HepG2 (cell line): ENCODE measurements at regions of chrX and their contacts with region 1.

Region 1: GRCh38 chrX:86946569-86946968 is 571.0 kb upstream of the KLHL4 start:
- DNase-seq: peak; percentile 30
- ATAC-seq: peak; percentile 74
- H3K4me3 ChIP-seq: no peak overlapping the region
- H3K27ac ChIP-seq: no peak overlapping the region
- H3K4me1 ChIP-seq: no peaks in the 10 kb centered on the region
- H3K27me3 ChIP-seq: no peaks in the 10 kb centered on the region
- CTCF ChIP-seq: peak; percentile 66
- EP300 ChIP-seq: no peak
- POLR2A ChIP-seq: no peak
- RAD21 ChIP-seq: no peak

Region 2: GRCh38 chrX:86322918-86323317 is 623.7 kb before region 1 on chrX:
- CTCF ChIA-PET with region 1: interaction called, 10 read pairs
- POLR2A ChIA-PET with region 1: no interaction called
- in situ Hi-C with region 1: loop called (anchors 25 kb)
- intact Hi-C with region 1: loop called (anchors 1 kb)
- DNase-seq: peak; percentile 23
- ATAC-seq: peak; percentile 94
- H3K4me3 ChIP-seq: no peak overlapping the region
- H3K27ac ChIP-seq: no peak overlapping the region
- H3K4me1 ChIP-seq: no peaks in the 10 kb centered on the region
- H3K27me3 ChIP-seq: no peaks in the 10 kb centered on the region
- CTCF ChIP-seq: peak; percentile 80
- EP300 ChIP-seq: no peak
- POLR2A ChIP-seq: no peak
- RAD21 ChIP-seq: 0 out of 2 replicates have a peak, but pooled peaks have one; percentile 60

Region 3: DNA sequence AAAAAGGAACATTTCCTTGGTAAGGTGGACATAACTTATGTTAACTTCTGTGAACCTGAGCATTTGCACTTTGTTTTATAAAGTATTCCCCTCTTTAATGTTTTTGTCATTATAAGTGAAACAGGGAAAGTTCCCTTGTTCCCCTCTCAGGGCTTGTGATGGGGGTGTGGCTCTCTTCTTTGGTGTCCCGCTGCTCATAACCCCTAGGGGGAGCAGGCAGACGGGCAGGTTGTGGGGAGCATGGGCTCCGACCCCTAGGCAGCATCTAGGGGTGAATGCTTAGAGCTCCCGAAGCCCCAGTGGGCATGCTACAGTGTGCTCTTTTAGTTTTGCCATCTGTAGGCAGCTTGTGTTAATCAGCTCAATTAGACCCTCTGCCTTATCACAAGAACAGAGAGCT is 597.9 kb before region 1 on chrX:
- CTCF ChIA-PET with region 1: no interaction called
- POLR2A ChIA-PET with region 1: no interaction called
- in situ Hi-C with region 1: loop called (anchors 25 kb)
- intact Hi-C with region 1: no loop called
- DNase-seq: peak; percentile 10
- ATAC-seq: peak; percentile 91
- H3K4me3 ChIP-seq: no peak overlapping the region
- H3K27ac ChIP-seq: no peak overlapping the region
- H3K4me1 ChIP-seq: no peaks in the 10 kb centered on the region
- H3K27me3 ChIP-seq: no peaks in the 10 kb centered on the region
- CTCF ChIP-seq: peak; percentile 56
- EP300 ChIP-seq: no peak
- POLR2A ChIP-seq: no peak
- RAD21 ChIP-seq: no peak

Region 4: DNA sequence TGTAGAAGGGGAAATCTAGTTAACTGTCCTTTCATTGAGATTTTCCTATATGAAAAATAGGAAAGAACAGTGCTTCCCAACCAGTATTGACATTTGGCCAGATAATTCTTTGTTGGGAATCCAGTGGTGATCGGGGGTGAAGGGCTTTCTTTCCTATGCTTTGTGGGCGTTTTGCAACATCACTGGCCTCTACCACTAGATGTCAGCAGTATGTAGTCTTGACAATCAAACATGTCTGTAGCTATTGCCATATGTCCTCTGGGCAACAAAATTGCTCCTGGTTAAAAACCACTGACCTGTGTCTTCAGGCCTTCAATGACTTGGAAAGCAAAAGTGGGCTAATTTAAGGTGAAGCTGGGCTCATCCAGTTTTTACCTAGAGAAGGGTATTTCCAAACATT is 139.8 kb before region 1 on chrX:
- CTCF ChIA-PET with region 1: no interaction called
- POLR2A ChIA-PET with region 1: no interaction called
- in situ Hi-C with region 1: no loop called
- intact Hi-C with region 1: loop called (anchors 1 kb)
- DNase-seq: peak; percentile 6
- ATAC-seq: peak; percentile 70
- H3K4me3 ChIP-seq: no peak overlapping the region
- H3K27ac ChIP-seq: no peak overlapping the region
- H3K4me1 ChIP-seq: no peaks in the 10 kb centered on the region
- H3K27me3 ChIP-seq: no peaks in the 10 kb centered on the region
- CTCF ChIP-seq: peak; percentile 50
- EP300 ChIP-seq: no peak
- POLR2A ChIP-seq: no peak
- RAD21 ChIP-seq: no peak